WTC11 (cell line): ENCODE measurements at regions of chr4 and their contacts with region 1.

Region 1: DNA sequence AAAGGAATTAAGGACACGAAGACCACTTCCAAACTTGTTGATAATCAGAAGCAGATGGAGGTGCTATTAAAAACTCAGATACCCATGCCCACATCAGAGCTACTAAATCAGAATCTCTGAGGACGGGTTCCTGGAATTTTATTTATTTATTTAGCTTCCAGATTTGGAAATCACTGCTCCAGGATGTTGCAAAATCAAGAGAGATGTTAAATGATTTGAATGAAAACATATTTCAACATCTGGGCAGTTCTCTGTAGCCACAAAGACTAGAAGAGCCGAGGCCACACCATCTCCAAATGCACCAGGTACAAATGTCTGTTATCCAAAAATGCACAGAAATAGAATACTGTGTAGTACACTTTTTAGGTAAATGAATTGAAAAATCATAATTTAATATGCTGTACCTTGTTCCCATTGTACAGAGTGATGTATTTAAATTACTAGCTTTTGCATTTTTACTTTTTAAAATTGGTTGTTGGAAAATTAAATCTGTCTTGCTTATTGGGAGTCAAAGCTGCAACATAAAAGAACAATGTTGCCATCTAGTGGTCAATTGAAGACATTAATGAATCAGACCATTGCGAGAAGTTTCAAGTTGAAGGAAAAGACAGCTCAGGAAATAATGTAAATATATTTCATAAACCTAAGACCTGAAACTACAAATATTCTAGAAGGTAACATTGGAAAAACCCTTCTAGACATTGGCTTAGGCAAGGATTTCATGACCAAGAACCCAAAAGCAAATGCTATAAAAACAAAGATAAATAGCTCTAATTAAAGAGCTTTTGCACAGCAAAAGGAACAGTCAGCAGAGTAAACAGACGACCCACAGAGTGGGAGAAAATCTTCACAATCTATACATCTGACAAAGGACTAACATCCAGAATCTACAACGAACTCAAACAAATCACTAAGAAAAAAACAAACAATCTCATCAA is 151.3 kb upstream of the TTC29 start:
- DNase-seq: no peak
- ATAC-seq: peak; percentile 34; the same call in 1 of the 2 replicates
- H3K4me3 Mint-ChIP-seq: no peak overlapping the region
- H3K27ac Mint-ChIP-seq: no peak overlapping the region
- H3K4me1 Mint-ChIP-seq: peaks cover 6% of the 10 kb centered on the region
- H3K27me3 Mint-ChIP-seq: no peaks in the 10 kb centered on the region
- CTCF ChIP-seq: peak; percentile 59

Region 2: GRCh38 chr4:146945556-146946374 is 151.2 kb before region 1 on chr4 and contains the start of gene TTC29:
- CTCF ChIA-PET with region 1: interaction called, 10 read pairs
- POLR2A ChIA-PET with region 1: no interaction called
- DNase-seq: peak; percentile 98
- ATAC-seq: peak; percentile 100
- H3K4me3 Mint-ChIP-seq: peak within 1 kb of the TSS; percentile 72
- H3K27ac Mint-ChIP-seq: no peak within 1 kb of the TSS
- H3K4me1 Mint-ChIP-seq: peaks cover 44% of the 10 kb centered on the region
- H3K27me3 Mint-ChIP-seq: peaks cover 32% of the 10 kb centered on the region
- CTCF ChIP-seq: no peak
- total RNA-seq, gene TTC29: 0.09 to 0.16 TPM in 2 of 3 replicates, not detected in the other

Region 3: DNA sequence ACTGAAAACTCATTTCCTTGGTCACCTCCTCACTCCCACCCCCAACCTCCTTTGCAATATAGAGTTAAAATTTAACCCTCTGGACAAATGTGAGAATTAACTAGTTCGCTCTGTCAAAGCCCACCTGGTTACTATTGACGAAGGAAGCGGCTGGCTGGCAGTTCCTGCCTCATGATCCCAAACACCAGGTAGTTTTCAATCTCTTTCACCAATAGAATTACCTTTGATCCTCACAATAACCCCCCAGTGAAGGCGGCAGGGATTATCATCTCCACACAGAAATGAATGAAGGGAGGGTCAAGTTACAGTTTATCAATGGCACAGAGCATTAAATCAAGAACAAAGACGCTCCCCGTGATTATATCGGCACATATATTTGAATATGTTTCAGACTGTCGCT is 85.5 kb before region 1 on chr4:
- CTCF ChIA-PET with region 1: interaction called, 13 read pairs
- POLR2A ChIA-PET with region 1: no interaction called
- DNase-seq: no peak
- ATAC-seq: peak; percentile 24
- H3K4me3 Mint-ChIP-seq: no peak overlapping the region; the same call in 1 of the 2 replicates
- H3K27ac Mint-ChIP-seq: peak overlapping the region; percentile 37
- H3K4me1 Mint-ChIP-seq: peaks cover 50% of the 10 kb centered on the region
- H3K27me3 Mint-ChIP-seq: no peaks in the 10 kb centered on the region
- CTCF ChIP-seq: no peak

Region 4: GRCh38 chr4:147019061-147019460 is 77.9 kb before region 1 on chr4:
- CTCF ChIA-PET with region 1: interaction called, 70 read pairs
- POLR2A ChIA-PET with region 1: no interaction called
- DNase-seq: peak; percentile 74
- ATAC-seq: peak; percentile 85
- H3K4me3 Mint-ChIP-seq: no peak overlapping the region
- H3K27ac Mint-ChIP-seq: no peak overlapping the region
- H3K4me1 Mint-ChIP-seq: peaks cover 12% of the 10 kb centered on the region
- H3K27me3 Mint-ChIP-seq: no peaks in the 10 kb centered on the region
- CTCF ChIP-seq: peak; percentile 48

Region 5: DNA sequence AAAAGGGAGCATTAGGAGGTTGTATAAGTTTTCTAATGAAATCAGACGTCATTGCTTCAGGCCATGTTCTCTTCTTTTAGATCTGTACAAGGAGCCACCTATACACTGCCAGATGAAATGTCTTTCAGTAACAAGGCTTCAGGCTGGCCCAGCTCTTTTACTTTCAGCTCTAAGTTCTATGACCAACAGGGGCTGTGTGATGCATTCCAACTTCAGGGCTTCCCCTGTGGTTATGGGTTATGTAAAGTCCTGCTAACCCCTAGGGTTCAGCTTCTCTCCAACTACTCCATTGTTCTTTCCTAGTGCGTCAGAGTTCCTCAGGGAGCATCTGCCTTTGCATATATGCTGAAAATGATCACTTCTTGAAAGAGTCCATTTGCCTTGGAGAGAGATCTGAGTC is 71.9 kb before region 1 on chr4:
- CTCF ChIA-PET with region 1: interaction called, 14 read pairs
- POLR2A ChIA-PET with region 1: no interaction called
- DNase-seq: no peak
- ATAC-seq: peak; percentile 74
- H3K4me3 Mint-ChIP-seq: no peak overlapping the region
- H3K27ac Mint-ChIP-seq: no peak overlapping the region
- H3K4me1 Mint-ChIP-seq: no peaks in the 10 kb centered on the region; the same call in 1 of the 2 replicates
- H3K27me3 Mint-ChIP-seq: no peaks in the 10 kb centered on the region
- CTCF ChIP-seq: no peak

Region 6: DNA sequence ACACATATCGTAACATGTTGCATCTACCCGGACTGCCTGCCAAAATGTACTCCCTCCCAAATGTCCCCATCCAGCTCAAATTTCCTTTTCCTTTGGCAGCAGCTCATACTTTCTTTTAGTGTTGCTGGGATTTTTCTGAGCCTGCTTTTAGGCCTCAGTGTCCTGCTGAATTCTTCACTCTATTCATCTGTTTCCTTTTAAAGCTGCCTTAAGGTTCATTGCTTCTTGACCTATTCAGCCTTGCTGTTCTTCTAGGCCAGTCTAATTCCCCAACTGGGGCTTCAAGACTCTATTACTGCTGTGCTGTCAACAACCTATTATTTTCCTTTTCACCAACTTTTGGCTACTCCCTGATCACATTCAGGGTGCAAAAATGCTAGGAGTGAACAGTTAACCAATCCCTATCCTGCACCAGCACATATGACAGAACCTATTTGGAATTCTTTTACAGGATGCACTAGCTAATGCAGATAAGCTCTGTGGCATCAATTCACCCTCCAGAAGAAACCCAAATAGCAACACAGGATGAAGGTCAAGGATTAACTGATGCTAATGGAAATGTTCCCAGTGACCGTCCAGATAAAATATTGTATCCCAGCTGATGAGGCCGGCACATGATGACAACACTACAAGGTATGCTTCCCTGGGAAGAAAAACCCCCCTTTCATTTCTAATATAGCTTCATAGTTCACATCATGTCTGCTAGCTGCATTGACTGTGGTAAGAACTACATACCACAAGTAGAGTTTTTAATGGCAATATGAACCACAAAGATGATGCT is 36.6 kb before region 1 on chr4:
- CTCF ChIA-PET with region 1: interaction called, 11 read pairs
- POLR2A ChIA-PET with region 1: no interaction called
- DNase-seq: no peak
- ATAC-seq: no peak
- H3K4me3 Mint-ChIP-seq: no peak overlapping the region
- H3K27ac Mint-ChIP-seq: no peak overlapping the region
- H3K4me1 Mint-ChIP-seq: peaks cover 24% of the 10 kb centered on the region
- H3K27me3 Mint-ChIP-seq: no peaks in the 10 kb centered on the region
- CTCF ChIP-seq: no peak

Region 7: GRCh38 chr4:147590249-147590920 is 493.4 kb after region 1 on chr4:
- CTCF ChIA-PET with region 1: interaction called, 11 read pairs
- POLR2A ChIA-PET with region 1: no interaction called
- DNase-seq: peak; percentile 70
- ATAC-seq: peak; percentile 72
- H3K4me3 Mint-ChIP-seq: no peak overlapping the region
- H3K27ac Mint-ChIP-seq: no peak overlapping the region
- H3K4me1 Mint-ChIP-seq: peaks cover 23% of the 10 kb centered on the region
- H3K27me3 Mint-ChIP-seq: no peaks in the 10 kb centered on the region
- CTCF ChIP-seq: peak; percentile 51